ENCODE measurements at regions of chr1 and their contacts with region 1.

Region 1: GRCh38 chr1:227934476-227935313 is 13.0 kb downstream of the WNT9A start:
- DNase-seq: no peak
- H3K4me3 ChIP-seq: no peak overlapping the region
- H3K4me1 ChIP-seq: no peaks in the 10 kb centered on the region
- H3K27me3 ChIP-seq: no peaks in the 10 kb centered on the region

Region 2: DNA sequence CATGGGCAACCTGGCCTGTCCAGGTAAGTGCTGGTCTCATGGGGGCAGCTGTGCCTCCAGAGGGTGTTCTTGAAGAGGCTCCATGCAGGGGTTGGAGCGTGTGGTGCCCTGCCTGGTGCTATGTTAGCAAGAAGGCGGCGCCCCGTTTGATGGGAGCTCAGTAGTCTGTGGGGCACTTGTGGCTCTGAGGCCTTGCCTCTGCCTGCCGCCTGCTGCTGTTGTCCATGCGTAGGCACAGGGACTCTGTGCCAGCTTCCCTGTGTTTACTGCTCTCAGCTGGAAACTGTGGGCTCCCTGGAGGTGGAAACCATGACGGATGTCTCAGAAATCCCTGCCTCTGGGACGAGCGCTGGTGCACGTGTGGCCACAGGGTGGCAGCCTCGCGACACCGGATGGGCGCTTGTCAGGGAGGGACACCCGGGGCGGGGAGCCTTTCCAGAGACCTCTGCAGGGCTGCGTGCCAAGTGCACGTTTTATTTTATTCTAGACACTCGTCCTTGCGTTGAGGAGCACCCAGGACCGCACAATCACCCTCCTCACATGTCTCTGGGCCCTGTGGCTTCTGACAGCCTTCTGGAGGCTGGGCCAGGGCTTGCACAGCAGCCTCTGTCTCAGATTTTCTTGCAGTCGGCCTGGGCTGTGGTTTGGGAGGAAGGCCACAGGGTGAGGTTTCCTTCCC is 172.3 kb before region 1 on chr1:
- in situ Hi-C with region 1: loop called (anchors 5 kb)
- DNase-seq: peak; percentile 60 to 91
- H3K4me3 ChIP-seq: no peak overlapping the region
- H3K4me1 ChIP-seq: 0 out of 2 replicates have a peak, but pooled peaks cover 2% of the 10 kb centered on the region
- H3K27me3 ChIP-seq: no peaks in the 10 kb centered on the region

Measured in HAP-1 (cell line).